ENCODE measurements at regions of chr18 and their contacts with region 1.

Region 1: DNA sequence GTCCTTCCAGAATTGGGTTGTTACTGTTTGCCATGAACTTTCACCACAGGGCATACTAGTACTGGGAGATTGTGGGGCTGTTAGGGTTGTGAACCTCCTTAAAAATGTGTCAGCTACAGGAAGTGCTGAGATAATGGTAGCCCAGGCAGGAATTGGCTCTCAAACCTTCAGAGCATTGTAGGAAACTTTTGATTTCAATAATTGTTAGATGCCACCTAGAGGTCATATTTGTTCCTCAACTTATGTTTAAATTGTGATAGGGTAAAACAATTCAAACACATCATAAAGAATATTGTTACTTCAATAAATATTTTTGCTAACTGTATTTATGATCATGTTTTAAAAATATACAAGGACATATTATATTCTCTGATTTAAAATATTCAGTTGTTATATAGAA is 594.6 kb downstream of the ADCYAP1 start:
- DNase-seq: no peak
- H3K4me3 ChIP-seq: no peak overlapping the region
- H3K4me3 Mint-ChIP-seq: no peak overlapping the region
- H3K27ac Mint-ChIP-seq: no peak overlapping the region
- H3K4me1 ChIP-seq: no peaks in the 10 kb centered on the region
- H3K4me1 Mint-ChIP-seq: no peaks in the 10 kb centered on the region
- H3K27me3 ChIP-seq: no peaks in the 10 kb centered on the region
- H3K27me3 Mint-ChIP-seq: no peaks in the 10 kb centered on the region
- CTCF ChIP-seq: peak; percentile 11 to 22

Region 2: DNA sequence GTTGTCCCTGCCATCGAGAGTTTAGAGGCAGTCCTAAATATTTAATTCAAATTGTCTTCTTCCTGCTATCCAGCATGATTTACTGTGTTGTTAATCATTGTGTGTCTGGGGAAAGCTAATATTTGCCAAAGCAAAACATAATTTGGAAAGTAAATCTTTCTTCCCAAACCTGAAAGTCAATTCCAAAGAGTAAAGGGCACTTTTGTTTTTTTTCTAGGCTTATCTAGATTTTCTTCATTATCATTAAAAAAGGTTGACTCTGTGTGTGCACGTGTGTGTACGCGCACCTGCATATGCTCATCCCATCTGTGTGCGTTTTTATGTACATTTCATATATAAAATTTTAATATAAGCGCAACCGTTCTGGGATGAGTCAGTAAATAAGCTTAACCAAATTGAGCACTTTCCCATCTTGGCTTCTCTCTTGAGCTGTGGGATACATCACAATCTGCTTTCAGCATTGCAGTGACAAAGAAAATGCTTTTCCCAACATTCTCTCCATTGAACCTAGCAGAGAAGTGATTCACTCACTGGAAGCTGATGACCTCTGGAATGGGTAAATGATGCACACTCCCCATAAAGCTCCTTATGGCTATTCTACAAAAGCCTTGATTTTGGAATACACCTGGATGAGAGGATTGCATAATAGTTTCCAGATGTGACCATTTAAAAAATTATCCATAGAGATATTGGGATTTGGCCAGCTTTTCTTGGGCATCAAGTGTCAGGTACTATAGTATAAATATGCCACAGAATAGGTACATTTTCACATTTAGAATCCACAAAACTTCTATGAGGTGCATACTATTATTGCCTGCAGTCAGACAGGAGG is 106.1 kb before region 1 on chr18:
- CTCF ChIA-PET with region 1: no interaction called
- POLR2A ChIA-PET with region 1: no interaction called
- intact Hi-C with region 1: loop called (anchors 10 kb)
- DNase-seq: no peak
- H3K4me3 ChIP-seq: no peak overlapping the region
- H3K4me3 Mint-ChIP-seq: no peak overlapping the region
- H3K27ac Mint-ChIP-seq: no peak overlapping the region
- H3K4me1 ChIP-seq: peaks cover 26% of the 10 kb centered on the region
- H3K4me1 Mint-ChIP-seq: peaks cover 20% of the 10 kb centered on the region
- H3K27me3 ChIP-seq: no peaks in the 10 kb centered on the region
- H3K27me3 Mint-ChIP-seq: no peaks in the 10 kb centered on the region
- CTCF ChIP-seq: no peak

Region 3: GRCh38 chr18:1438458-1438910 is 60.8 kb before region 1 on chr18:
- CTCF ChIA-PET with region 1: no interaction called
- POLR2A ChIA-PET with region 1: no interaction called
- intact Hi-C with region 1: no loop called
- DNase-seq: no peak
- H3K4me3 ChIP-seq: no peak overlapping the region
- H3K4me3 Mint-ChIP-seq: no peak overlapping the region
- H3K27ac Mint-ChIP-seq: no peak overlapping the region
- H3K4me1 ChIP-seq: no peaks in the 10 kb centered on the region
- H3K4me1 Mint-ChIP-seq: no peaks in the 10 kb centered on the region
- H3K27me3 ChIP-seq: no peaks in the 10 kb centered on the region
- H3K27me3 Mint-ChIP-seq: peaks cover 2% of the 10 kb centered on the region
- CTCF ChIP-seq: no peak

Region 4: DNA sequence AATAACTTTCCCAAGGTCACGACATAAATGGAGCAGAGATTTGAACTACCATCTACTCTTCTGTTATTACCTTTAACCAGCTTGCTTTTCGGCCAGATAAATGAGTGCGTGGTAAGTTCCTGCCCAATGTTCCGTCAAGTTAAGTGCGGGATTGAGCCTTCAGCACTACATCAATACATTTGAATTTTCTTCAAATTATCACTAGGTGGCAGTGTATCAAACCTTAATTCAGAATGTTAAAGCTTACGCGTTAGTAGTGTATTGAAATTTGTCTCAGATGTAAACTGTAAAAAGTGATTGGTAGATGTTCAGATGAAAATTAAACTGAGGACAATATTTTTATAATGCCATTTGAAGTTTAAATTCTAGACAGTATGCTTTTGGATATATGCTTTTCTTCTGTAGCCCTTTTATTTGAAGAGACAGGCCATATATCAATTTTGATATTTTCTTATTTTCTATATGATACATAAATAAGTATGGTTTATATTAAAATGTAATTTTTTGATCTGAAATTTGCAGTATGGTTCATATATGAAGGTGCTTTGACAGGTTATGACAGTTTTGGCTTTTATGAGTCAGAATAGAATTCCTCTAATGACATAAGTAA is 86.7 kb after region 1 on chr18:
- CTCF ChIA-PET with region 1: no interaction called
- POLR2A ChIA-PET with region 1: no interaction called
- intact Hi-C with region 1: no loop called
- DNase-seq: peak in 1 of 2 experiments; percentile 9
- H3K4me3 ChIP-seq: no peak overlapping the region
- H3K4me3 Mint-ChIP-seq: no peak overlapping the region
- H3K27ac Mint-ChIP-seq: no peak overlapping the region
- H3K4me1 ChIP-seq: no peaks in the 10 kb centered on the region
- H3K4me1 Mint-ChIP-seq: no peaks in the 10 kb centered on the region
- H3K27me3 ChIP-seq: no peaks in the 10 kb centered on the region; the same call in none of the 2 replicates
- H3K27me3 Mint-ChIP-seq: peaks cover 11% of the 10 kb centered on the region
- CTCF ChIP-seq: peak in 1 of 2 experiments; percentile 48